Endothelial cell of umbilical vein (primary cell): ENCODE measurements at regions of chr13 and their contacts with region 1.

Region 1: DNA sequence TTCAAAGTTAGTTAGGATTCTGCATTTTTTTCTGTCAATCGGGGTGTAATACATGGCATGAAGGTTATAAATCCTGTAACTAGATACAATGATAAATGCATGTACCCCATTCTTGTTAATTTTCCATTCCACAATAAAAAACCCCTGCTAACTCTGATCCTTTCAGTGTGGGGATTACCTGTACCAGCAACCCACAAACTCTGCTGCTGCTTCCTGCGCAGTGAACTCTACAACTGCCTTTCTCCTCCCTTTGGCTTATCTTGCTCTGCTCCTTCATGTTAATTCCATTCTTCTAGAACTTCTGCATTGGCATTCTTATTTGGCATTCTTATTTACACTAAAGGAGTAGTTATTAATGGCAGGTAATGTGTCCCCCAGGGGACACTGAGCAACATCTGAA is 273.1 kb downstream of the KLF12 start:
- DNase-seq: no peak
- H3K4me3 ChIP-seq: no peak overlapping the region
- H3K27ac ChIP-seq: no peak overlapping the region
- H3K4me1 ChIP-seq: no peaks in the 10 kb centered on the region
- H3K27me3 ChIP-seq: no peaks in the 10 kb centered on the region
- CTCF ChIP-seq: no peak
- POLR2A ChIP-seq: no peak

Region 2: GRCh38 chr13:72565893-72566292 is 1295.2 kb before region 1 on chr13:
- CTCF ChIA-PET with region 1: no interaction called
- POLR2A ChIA-PET with region 1: no interaction called
- dilution Hi-C with region 1: no loop called
- intact Hi-C with region 1: no loop called
- DNase-seq: peak; percentile 25
- H3K4me3 ChIP-seq: no peak overlapping the region
- H3K27ac ChIP-seq: no peak overlapping the region
- H3K4me1 ChIP-seq: no peaks in the 10 kb centered on the region
- H3K27me3 ChIP-seq: no peaks in the 10 kb centered on the region
- CTCF ChIP-seq: peak; percentile 28 to 37
- POLR2A ChIP-seq: no peak

Region 3: DNA sequence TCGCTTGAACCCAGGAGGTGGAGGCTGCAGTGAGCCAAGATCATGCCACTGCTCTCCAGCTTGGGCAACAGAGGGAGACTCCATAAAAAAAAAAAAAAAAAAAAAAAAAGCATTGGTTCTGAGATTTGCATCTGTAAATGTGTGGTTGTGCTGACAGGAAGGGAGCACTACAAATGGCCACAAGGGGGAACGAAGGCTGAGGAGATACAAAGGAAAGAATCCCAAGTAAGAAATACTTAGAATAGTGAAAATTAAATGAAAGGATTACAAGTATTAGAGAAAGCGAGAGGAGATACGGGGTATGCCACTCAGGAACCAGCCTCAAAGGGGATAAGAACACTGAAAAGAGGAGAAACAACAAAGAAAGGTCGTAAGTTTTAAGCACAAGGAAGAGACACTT is 11.8 kb before region 1 on chr13:
- CTCF ChIA-PET with region 1: interaction called, 11 read pairs
- POLR2A ChIA-PET with region 1: no interaction called
- dilution Hi-C with region 1: no loop called
- intact Hi-C with region 1: no loop called
- DNase-seq: peak; percentile 36
- H3K4me3 ChIP-seq: no peak overlapping the region
- H3K27ac ChIP-seq: no peak overlapping the region
- H3K4me1 ChIP-seq: peaks cover 8% of the 10 kb centered on the region
- H3K27me3 ChIP-seq: no peaks in the 10 kb centered on the region
- CTCF ChIP-seq: peak; percentile 21 to 24
- POLR2A ChIP-seq: no peak

Region 4: GRCh38 chr13:74217811-74218210 is 356.7 kb after region 1 on chr13:
- CTCF ChIA-PET with region 1: no interaction called
- POLR2A ChIA-PET with region 1: no interaction called
- dilution Hi-C with region 1: no loop called
- intact Hi-C with region 1: no loop called
- DNase-seq: no peak
- H3K4me3 ChIP-seq: no peak overlapping the region
- H3K27ac ChIP-seq: no peak overlapping the region
- H3K4me1 ChIP-seq: no peaks in the 10 kb centered on the region
- H3K27me3 ChIP-seq: no peaks in the 10 kb centered on the region
- CTCF ChIP-seq: no peak
- POLR2A ChIP-seq: no peak